AG04449 (cell line): ENCODE measurements at regions of chr5 and their contacts with region 1.

Region 1: GRCh38 chr5:350355-350754 is 28.8 kb downstream of the AHRR start:
- DNase-seq: no peak
- H3K4me3 ChIP-seq: no peak overlapping the region
- CTCF ChIP-seq: no peak

Region 2: GRCh38 chr5:337563-338130 is 12.7 kb before region 1 on chr5:
- CTCF ChIA-PET with region 1: interaction called, 12 read pairs
- POLR2A ChIA-PET with region 1: no interaction called
- DNase-seq: no peak
- H3K4me3 ChIP-seq: no peak overlapping the region
- CTCF ChIP-seq: peak; percentile 59

Region 3: DNA sequence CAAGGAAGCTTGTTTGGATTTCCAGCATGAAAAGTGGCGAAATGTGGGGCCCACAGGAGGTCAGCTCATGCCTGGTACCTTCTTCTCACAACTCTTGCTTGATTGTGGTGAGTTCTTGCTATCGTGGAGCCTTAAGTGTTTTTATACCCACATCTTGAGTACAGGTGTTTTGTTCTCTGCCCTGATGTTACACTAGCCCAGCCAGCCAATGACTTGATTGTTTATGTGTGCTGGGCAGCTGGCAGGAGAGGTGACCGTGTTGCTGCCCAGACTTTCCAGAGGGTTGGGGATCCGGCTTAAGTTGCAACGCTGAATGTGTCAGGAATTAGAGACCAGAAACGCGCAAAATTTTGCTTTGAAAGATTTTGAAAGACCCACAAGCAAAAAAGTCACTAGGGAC is 366.8 kb after region 1 on chr5:
- CTCF ChIA-PET with region 1: no interaction called
- POLR2A ChIA-PET with region 1: no interaction called
- DNase-seq: no peak
- H3K4me3 ChIP-seq: no peak overlapping the region
- CTCF ChIP-seq: no peak